Head of caudate nucleus (tissue), 42 donors: ENCODE measurements at regions of chr5 and their contacts with region 1.

Region 1: DNA sequence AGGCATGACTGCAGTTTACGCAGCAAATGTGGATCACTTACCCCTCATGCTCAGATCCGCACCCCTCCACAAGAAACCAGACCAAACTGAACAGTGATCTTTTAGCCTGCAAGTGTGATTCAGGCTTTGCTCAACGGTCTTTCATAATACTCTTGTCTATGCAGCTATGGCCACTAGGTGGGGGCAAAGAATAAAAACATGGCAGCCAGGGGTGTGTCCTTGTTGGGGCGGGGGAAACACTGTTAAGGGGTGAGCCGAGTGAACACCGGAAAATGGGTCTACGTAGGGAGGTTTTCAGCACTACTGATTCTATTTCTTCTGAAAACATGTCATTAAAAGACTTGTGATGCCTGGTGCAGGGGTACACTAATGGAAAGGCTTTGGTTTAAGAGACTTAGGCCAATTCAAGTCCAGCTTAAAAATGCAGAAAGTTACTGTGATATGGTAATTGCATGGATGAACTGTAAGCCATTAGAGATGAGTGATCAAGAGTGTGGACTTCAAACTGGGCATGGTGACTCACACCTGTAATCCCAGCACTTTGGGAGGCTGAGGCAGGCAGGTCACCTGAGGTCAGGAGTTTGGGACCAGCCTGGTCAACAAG is 49.9 kb upstream of the GPR151 start:
- DNase-seq: peak; percentile 32 to 87 (median 68)

Region 2: DNA sequence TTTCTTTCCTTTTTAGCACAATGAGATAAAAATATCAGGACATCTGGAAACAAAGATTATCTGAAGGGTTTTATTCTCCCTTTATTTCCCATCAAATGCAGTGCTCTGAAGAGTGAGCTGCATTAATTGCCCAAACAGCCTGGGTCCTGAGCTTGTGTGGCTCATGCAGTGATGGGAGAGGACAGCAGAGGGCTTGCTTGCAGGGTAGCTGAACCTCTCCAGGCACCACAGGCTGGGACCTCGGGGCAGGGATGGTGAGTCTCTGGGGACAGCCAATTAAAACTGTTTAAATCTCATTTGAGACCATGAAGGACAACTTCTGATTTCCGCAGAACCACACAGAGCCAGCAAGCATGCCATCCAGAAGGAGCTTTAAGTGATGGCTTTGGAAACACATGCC is 531.7 kb before region 1 on chr5:
- intact Hi-C with region 1: no loop called
- DNase-seq: no peak

Region 3: DNA sequence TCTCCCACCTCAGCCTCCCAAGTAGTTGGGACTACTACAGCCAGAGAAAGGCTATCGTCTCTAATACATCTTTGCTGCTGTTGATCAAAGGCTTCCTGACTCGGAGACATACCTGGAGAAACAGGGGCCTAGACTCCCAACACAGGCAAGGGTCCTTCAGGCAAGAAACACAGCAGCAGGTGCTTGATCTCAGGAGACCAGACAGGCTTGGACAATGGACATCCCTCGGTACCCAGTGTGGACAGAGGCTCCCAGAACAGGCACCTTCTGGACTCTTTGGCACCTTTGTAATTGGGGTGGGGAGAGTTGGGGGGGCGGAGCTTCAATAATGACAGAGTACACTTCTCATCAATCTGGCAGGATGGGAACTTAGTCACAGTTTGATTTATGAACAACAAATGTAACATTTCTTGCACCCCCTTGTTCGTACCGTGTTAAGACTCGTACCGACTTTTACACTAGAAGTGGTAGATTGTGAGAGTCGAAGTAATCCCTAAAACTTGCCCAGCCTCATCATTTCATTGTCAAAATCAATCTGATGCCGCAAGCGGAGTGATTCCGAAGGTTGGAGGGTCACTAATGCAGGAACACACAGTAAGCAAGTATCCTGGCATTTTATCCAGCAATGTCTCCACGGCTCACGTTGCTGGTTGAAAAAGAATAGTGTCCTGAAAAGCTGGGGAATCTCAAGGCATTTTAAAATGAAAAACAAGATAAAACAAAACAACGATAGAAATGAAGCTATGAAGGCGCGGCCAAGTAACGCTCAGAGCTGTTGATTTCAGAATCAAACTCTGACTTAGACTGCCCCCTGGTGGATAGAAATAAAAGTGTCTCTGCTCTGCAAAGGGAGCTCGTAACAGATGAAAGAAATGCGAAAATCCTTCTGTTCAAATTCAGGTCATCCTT is 622.6 kb after region 1 on chr5:
- intact Hi-C with region 1: loop called (anchors 10 kb)
- DNase-seq: peak in 38 of 42 donors; percentile 20 to 94 (median 68)